Calu3 (cell line): ENCODE measurements at regions of chr3 and their contacts with region 1.

Region 1: DNA sequence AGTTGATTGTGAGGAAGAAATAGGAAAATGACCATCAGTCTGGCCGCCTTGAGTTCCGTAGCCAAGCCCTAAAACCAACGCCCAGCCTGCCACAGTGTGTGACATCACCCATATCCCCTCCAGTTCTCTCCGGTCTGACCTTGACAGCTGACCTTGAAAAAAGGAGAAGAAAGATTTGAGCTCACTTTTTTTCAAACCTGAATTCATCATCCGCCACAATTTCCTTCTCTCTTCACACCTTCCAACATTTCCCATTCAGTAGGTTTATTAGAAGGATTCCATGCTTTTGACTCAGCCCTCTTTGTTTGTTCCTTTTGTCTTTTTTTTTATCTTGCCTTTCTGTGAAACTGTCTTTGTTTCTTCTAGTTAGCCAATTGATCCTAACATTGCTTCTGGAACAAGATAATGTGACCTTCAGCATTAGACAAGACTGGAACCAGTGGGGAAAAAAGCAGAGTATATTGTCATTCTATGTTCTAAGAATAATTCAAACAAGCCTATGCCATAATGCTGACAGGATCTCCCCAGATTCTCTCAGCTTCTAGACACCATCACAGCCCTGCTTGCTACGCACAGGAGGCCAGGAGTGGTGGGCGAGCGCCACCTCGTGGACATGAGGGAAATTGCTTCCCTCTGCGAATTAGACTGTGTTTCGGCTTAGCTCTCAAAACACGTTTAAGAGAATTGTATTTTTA is 283.1 kb downstream of the FGF12 start:
- DNase-seq: peak; percentile 86
- H3K4me3 Mint-ChIP-seq: no peak overlapping the region
- H3K27ac Mint-ChIP-seq: peak overlapping the region; percentile 20
- H3K4me1 Mint-ChIP-seq: peaks cover 16% of the 10 kb centered on the region
- H3K27me3 Mint-ChIP-seq: peaks cover 25% of the 10 kb centered on the region
- CTCF ChIP-seq: peak; percentile 100

Region 2: GRCh38 chr3:191412759-191413158 is 1031.5 kb before region 1 on chr3:
- CTCF ChIA-PET with region 1: no interaction called
- intact Hi-C with region 1: loop called (anchors 1 kb)
- DNase-seq: no peak
- H3K4me3 Mint-ChIP-seq: no peak overlapping the region
- H3K27ac Mint-ChIP-seq: no peak overlapping the region
- H3K4me1 Mint-ChIP-seq: peaks cover 8% of the 10 kb centered on the region
- H3K27me3 Mint-ChIP-seq: no peaks in the 10 kb centered on the region
- CTCF ChIP-seq: no peak

Region 3: DNA sequence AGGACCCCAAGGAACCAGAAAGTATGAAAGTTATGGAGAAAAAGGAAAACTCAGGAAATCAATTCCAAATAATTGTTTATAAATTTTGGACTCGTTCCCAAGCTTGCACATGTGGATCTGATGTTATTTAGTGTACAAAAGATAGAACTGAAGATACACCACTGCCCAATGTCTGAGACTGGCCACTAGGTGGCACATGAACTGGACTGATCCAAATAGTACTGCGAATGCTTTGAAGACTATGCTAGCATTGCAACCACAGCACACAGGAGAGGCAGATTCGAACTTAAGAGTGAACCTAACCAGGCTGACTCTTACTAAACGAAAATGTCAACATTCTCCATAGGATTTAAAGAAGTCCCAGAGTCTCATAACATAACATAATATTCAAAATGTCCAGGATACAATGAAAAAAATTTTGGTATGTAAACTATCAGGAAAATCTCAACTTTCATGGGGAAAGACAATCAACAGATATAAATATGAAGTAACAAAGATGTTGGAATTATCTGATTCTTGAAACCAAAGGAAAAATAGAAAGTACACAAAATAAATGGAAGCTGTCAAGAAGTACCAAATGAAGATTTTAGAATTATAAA is 313.6 kb before region 1 on chr3:
- CTCF ChIA-PET with region 1: interaction called, 19 read pairs
- intact Hi-C with region 1: loop called (anchors 1 kb)
- DNase-seq: peak; percentile 68
- H3K4me3 Mint-ChIP-seq: no peak overlapping the region
- H3K27ac Mint-ChIP-seq: no peak overlapping the region
- H3K4me1 Mint-ChIP-seq: no peaks in the 10 kb centered on the region
- H3K27me3 Mint-ChIP-seq: no peaks in the 10 kb centered on the region
- CTCF ChIP-seq: peak; percentile 83

Region 4: DNA sequence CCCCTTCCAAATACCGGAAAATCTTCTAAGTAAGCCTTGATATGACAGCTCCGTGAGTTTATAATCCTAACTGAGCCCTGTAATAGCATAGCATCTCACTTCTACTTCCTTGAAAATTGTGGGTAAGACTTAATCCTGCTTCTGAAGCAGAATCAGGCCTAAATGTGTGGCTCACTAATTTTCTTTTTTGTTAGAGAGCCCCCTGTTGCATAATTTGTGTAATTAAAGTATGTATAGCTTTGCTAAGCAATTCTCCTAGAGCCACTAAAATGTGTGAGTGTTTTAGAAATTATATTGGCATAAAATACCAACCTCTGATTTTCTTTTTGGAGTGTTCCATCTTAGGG is 21.3 kb before region 1 on chr3:
- CTCF ChIA-PET with region 1: interaction called, 28 read pairs
- intact Hi-C with region 1: no loop called
- DNase-seq: no peak
- H3K4me3 Mint-ChIP-seq: no peak overlapping the region
- H3K27ac Mint-ChIP-seq: peak overlapping the region; percentile 50
- H3K4me1 Mint-ChIP-seq: peaks cover 22% of the 10 kb centered on the region
- H3K27me3 Mint-ChIP-seq: no peaks in the 10 kb centered on the region
- CTCF ChIP-seq: peak; percentile 50